Transverse colon (tissue), 4 donors: ENCODE measurements at regions of chr22 and their contacts with region 1.

Region 1: GRCh38 chr22:28829358-28830181 is 29.2 kb upstream of the XBP1 start:
- DNase-seq: peak; percentile 85
- H3K4me3 ChIP-seq: no peak overlapping the region
- H3K27ac ChIP-seq: no peak overlapping the region
- H3K4me1 ChIP-seq: peaks cover 0 to 13% (median 2%) of the 10 kb centered on the region in 4 donors
- H3K27me3 ChIP-seq: no peaks in the 10 kb centered on the region
- CTCF ChIP-seq: peak; percentile 95 to 99 (median 97)
- EP300 ChIP-seq: no peak
- POLR2A ChIP-seq: no peak

Region 2: GRCh38 chr22:28009272-28009827 is 820.2 kb before region 1 on chr22:
- in situ Hi-C with region 1: loop called in 1 of 4 experiments (anchors 25 kb)
- intact Hi-C with region 1: loop called (anchors 10 kb)
- DNase-seq: peak; percentile 76
- H3K4me3 ChIP-seq: no peak overlapping the region
- H3K27ac ChIP-seq: peak overlapping the region in 3 of 4 donors; percentile 0 to 22 (median 6)
- H3K4me1 ChIP-seq: peaks cover 0 to 5% (median 1%) of the 10 kb centered on the region in 4 donors
- H3K27me3 ChIP-seq: no peaks in the 10 kb centered on the region
- CTCF ChIP-seq: peak; percentile 89 to 97 (median 93)
- EP300 ChIP-seq: no peak
- POLR2A ChIP-seq: no peak

Region 3: GRCh38 chr22:28019881-28020871 is 809.4 kb before region 1 on chr22:
- in situ Hi-C with region 1: loop called in 2 of 4 experiments (anchors 25 kb)
- intact Hi-C with region 1: loop called (anchors 10 kb)
- DNase-seq: peak; percentile 68
- H3K4me3 ChIP-seq: no peak overlapping the region
- H3K27ac ChIP-seq: peak overlapping the region in 2 of 4 donors; percentile 17 to 63
- H3K4me1 ChIP-seq: peaks cover 2 to 14% (median 10%) of the 10 kb centered on the region in 4 donors
- H3K27me3 ChIP-seq: no peaks in the 10 kb centered on the region
- CTCF ChIP-seq: peak; percentile 85 to 94 (median 92)
- EP300 ChIP-seq: no peak
- POLR2A ChIP-seq: no peak

Region 4: GRCh38 chr22:28034760-28035401 is 794.7 kb before region 1 on chr22:
- in situ Hi-C with region 1: loop called in 1 of 4 experiments (anchors 25 kb)
- intact Hi-C with region 1: no loop called
- DNase-seq: peak; percentile 41
- H3K4me3 ChIP-seq: no peak overlapping the region
- H3K27ac ChIP-seq: peak overlapping the region in 3 of 4 donors; percentile 2 to 44 (median 15)
- H3K4me1 ChIP-seq: peaks cover 10 to 24% (median 14%) of the 10 kb centered on the region in 4 donors
- H3K27me3 ChIP-seq: no peaks in the 10 kb centered on the region
- CTCF ChIP-seq: no peak
- EP300 ChIP-seq: no peak
- POLR2A ChIP-seq: no peak

Region 5: GRCh38 chr22:28051787-28052356 is 777.7 kb before region 1 on chr22:
- in situ Hi-C with region 1: loop called in 2 of 4 experiments (anchors 25 kb)
- intact Hi-C with region 1: no loop called
- DNase-seq: peak; percentile 67
- H3K4me3 ChIP-seq: no peak overlapping the region
- H3K27ac ChIP-seq: no peak overlapping the region
- H3K4me1 ChIP-seq: no peaks in the 10 kb centered on the region
- H3K27me3 ChIP-seq: no peaks in the 10 kb centered on the region
- CTCF ChIP-seq: peak; percentile 78 to 81 (median 80)
- EP300 ChIP-seq: no peak
- POLR2A ChIP-seq: no peak

Region 6: GRCh38 chr22:28600546-28601143 is 228.9 kb before region 1 on chr22:
- in situ Hi-C with region 1: loop called (anchors 5 to 25 kb)
- intact Hi-C with region 1: loop called (anchors 5 kb)
- DNase-seq: no peak
- H3K4me3 ChIP-seq: no peak overlapping the region
- H3K27ac ChIP-seq: no peak overlapping the region
- H3K4me1 ChIP-seq: no peaks in the 10 kb centered on the region
- H3K27me3 ChIP-seq: no peaks in the 10 kb centered on the region
- CTCF ChIP-seq: peak; percentile 48 to 62 (median 59)
- EP300 ChIP-seq: no peak
- POLR2A ChIP-seq: no peak